Activated CD8-positive, alpha-beta memory T cell treated with anti-CD3 and anti-CD28 coated beads, Interleukin-2, amount 10 ng/mL, durations not matched to agents 7 days and 5 days (primary cell): ENCODE measurements at regions of chr13 and their contacts with region 1.

Region 1: DNA sequence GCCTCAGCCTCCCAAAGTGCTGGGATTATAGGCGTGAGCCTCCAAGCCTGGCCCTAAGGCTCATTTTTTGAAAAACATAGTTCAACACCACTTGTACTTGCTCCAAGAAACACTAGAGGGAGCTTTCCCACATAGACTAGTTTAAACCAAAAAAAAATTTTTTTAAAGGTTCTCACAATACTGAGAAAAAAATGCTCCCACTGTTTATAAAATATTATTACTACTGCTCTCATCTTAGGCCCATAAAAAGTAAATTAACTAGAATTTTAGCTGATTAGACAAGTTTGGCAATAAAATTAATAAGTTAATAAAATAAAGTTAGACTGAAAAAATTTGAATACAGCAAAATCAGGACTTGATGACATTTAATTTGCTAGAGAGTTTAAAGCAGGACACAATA is 109.5 kb downstream of the TBC1D4 start:
- DNase-seq: no peak
- ATAC-seq: peak; percentile 65
- H3K4me3 Mint-ChIP-seq: no peak overlapping the region
- H3K27ac Mint-ChIP-seq: no peak overlapping the region
- H3K4me1 Mint-ChIP-seq: peaks cover under 1% of the 10 kb centered on the region
- H3K27me3 Mint-ChIP-seq: peaks cover 3% of the 10 kb centered on the region

Region 2: DNA sequence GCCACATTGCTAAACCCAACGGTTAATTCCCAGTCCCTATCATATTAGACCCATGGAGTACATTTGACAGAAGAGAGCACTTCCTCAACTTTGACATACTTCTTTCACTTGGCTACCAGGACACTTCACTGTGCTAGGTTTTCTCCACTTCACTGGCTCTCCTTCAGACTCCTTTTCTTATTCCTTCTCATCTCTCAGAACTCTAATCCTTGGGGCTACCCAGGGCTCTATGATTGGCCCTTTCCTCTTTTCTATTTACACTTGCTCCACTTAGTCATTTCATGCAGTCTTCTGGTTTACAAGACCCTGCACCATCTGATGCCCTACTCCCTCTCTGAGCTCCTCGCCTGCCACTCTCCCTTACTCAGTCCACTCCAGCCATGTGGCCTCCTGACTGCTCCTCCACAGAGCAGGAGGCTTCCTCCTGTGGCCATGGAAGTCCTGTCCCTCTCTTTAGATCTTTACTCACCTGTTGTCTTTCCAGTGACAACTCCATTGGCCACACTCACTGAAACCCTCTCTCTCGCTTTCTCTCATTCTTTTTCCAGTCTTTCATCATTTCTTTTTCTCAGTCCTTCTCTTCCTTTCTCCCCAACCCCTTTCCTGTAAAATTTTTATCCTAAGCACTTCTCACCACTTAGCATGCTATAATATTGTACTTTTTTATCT is 19.0 kb after region 1 on chr13:
- CTCF ChIA-PET with region 1: no interaction called
- DNase-seq: no peak
- ATAC-seq: no peak
- H3K4me3 Mint-ChIP-seq: no peak overlapping the region
- H3K27ac Mint-ChIP-seq: no peak overlapping the region
- H3K4me1 Mint-ChIP-seq: no peaks in the 10 kb centered on the region
- H3K27me3 Mint-ChIP-seq: no peaks in the 10 kb centered on the region

Region 3: DNA sequence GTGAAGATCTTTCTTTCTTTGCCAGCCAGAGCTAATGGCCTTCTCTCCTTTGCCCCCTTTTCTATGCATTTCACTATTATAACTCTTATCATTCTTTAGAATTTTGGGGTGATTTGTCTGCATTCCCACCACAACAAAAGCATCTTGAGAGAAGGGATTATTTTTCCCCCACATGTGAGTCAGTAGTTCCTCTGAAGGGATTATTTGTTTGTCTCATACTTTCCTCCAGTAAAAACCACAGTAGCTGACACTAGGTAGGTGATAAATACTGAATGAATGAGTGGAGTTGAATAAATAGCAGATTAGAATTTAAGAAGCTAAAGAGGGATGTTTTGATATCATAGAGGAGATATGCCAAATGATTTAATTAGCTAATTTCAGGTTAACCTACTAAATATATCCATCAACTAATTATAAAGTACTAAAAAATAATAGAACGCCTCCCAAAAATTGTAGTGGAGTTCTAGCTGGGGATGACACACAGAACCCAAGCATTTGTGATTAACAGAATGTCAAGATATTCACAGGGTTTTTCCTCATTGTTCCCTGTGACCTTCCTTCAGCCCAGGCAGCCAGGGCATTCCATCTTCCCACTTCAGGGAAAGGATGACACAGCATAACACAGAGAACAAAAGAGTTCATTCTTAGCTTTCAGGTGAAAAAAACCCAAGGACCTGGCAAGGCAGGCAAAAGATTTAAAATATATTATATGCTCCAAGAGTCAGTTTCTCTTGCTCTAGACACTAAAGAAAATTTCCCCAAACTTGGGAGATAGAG is 113.0 kb after region 1 on chr13:
- CTCF ChIA-PET with region 1: interaction called, 10 read pairs
- DNase-seq: no peak
- ATAC-seq: no peak
- H3K4me3 Mint-ChIP-seq: no peak overlapping the region
- H3K27ac Mint-ChIP-seq: no peak overlapping the region
- H3K4me1 Mint-ChIP-seq: peaks cover 26% of the 10 kb centered on the region
- H3K27me3 Mint-ChIP-seq: peaks cover 56% of the 10 kb centered on the region